Activated CD4-positive, alpha-beta memory T cell treated with anti-CD3 and anti-CD28 coated beads for 36 hours (primary cell): ENCODE measurements at regions of chr5 and their contacts with region 1.

Region 1: DNA sequence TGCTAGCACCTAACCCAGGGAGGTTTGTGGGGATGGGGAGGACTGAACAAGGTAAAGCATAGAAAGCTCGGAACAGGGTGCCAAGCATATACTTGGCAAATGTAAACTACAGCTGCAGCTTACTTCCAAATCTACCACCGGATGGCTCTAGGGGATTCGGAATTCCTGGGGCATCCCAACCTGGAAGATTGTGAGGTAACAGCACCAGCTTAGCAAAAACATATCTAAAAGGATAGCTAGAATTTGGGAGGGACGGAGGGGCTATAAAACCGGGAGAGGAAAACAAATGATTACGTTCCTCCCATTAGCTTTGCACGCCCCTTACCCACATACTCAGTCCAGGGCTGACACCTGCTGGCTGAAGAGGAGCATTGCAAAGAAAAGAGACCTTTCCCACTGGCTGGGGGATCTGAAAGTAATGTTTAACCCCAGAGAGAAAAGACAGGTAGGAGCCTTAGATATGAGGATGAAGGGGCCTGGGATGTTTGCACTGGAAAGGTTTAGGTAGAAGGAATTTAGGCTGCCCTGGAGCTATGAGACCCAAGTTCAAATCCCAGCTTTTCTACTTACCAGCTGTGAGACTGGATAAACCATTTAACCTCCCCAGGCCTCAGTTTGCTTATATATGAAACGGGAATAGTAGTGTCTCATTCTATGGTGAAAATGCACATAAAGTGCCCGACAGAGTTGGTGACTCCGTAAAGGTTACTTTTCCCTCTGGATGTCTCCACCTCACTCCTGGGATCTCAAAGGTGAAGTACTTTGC is 73.6 kb downstream of the FAM114A2 start:
- DNase-seq: peak; percentile 57
- H3K4me3 Mint-ChIP-seq: no peak overlapping the region
- H3K27ac Mint-ChIP-seq: no peak overlapping the region
- H3K4me1 Mint-ChIP-seq: peaks cover 9% of the 10 kb centered on the region
- H3K27me3 Mint-ChIP-seq: no peaks in the 10 kb centered on the region

Region 2: DNA sequence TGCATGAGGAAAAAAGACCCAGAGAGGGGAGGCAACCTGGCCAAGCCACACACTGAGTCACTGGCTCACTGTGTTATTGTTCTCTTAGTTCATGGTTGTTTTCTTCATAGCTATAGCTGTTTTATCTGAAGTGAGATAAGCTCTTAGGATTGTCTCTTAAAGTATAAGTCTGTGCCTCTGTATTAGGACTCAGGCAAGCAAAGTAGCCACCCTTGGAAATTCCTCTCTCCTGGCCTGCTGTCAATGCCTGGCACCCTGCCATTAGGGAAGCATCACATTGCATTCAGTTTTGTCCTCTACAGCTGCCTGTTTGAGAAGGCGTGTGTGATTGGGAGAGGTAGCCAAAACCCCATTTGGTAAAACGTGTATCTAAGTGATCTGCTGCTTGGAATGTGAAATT is 1893.0 kb before region 1 on chr5:
- CTCF ChIA-PET with region 1: no interaction called
- POLR2A ChIA-PET with region 1: no interaction called
- intact Hi-C with region 1: no loop called
- DNase-seq: no peak
- H3K4me3 Mint-ChIP-seq: no peak overlapping the region
- H3K27ac Mint-ChIP-seq: no peak overlapping the region
- H3K4me1 Mint-ChIP-seq: no peaks in the 10 kb centered on the region
- H3K27me3 Mint-ChIP-seq: no peaks in the 10 kb centered on the region

Region 3: GRCh38 chr5:152532714-152533113 is 1432.3 kb before region 1 on chr5:
- CTCF ChIA-PET with region 1: interaction called, 49 read pairs
- POLR2A ChIA-PET with region 1: no interaction called
- intact Hi-C with region 1: loop called (anchors 2 kb)
- DNase-seq: no peak
- H3K4me3 Mint-ChIP-seq: no peak overlapping the region
- H3K27ac Mint-ChIP-seq: no peak overlapping the region
- H3K4me1 Mint-ChIP-seq: peaks cover 5% of the 10 kb centered on the region
- H3K27me3 Mint-ChIP-seq: no peaks in the 10 kb centered on the region

Region 4: GRCh38 chr5:152560512-152561137 is 1404.4 kb before region 1 on chr5:
- CTCF ChIA-PET with region 1: interaction called, 30 read pairs
- POLR2A ChIA-PET with region 1: no interaction called
- intact Hi-C with region 1: no loop called
- DNase-seq: peak; percentile 60
- H3K4me3 Mint-ChIP-seq: no peak overlapping the region
- H3K27ac Mint-ChIP-seq: no peak overlapping the region
- H3K4me1 Mint-ChIP-seq: no peaks in the 10 kb centered on the region
- H3K27me3 Mint-ChIP-seq: no peaks in the 10 kb centered on the region

Region 5: GRCh38 chr5:153496835-153497234 is 468.2 kb before region 1 on chr5:
- CTCF ChIA-PET with region 1: no interaction called
- POLR2A ChIA-PET with region 1: no interaction called
- intact Hi-C with region 1: loop called (anchors 10 kb)
- DNase-seq: no peak
- H3K4me3 Mint-ChIP-seq: no peak overlapping the region
- H3K27ac Mint-ChIP-seq: no peak overlapping the region
- H3K4me1 Mint-ChIP-seq: no peaks in the 10 kb centered on the region
- H3K27me3 Mint-ChIP-seq: peaks cover 5% of the 10 kb centered on the region